H1 (cell line): ENCODE measurements at regions of chr2 and their contacts with region 1.

Region 1: DNA sequence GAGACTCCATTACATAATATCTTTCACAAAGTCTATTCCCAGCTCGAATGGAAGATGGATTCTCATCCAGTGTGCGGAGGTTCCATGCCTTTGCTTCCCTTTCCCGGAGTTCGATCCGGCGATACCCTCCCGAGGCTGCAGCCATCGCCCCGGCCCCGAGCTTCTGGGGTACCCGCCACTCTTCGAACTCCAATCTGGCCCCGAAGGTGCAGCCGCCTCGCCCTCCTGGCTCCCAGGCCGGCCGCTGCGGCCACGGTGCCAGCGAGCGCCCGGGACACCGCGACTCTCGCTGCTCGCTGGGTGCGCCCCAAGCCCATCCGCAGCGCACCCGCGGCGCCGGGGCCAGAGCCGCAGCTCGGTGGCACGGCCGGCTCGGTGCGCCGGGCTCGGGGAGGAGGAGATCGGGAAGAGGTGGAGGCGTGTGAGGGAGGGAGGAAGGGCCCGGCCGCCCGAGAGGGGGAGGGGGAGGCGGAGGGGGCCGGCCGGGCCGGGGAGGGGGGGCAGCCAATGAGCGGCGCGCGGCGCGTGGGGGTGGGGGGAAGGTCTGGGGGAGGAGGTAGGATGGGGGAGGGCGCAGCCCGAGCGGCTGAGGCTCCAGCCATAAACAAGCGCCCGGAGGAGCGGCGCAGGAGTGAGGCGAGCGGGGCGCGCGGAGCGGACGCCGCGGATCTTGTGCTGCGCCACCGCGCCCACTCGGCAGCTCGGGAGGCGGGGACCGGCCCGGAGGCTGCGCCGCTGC is at the start of gene CRIM1:
- DNase-seq: peak; percentile 67 to 84
- H3K4me3 ChIP-seq: peak within 1 kb of the TSS; percentile 80 to 93 (median 84)
- H3K27ac ChIP-seq: peak within 1 kb of the TSS; percentile 53; the same call in 1 of the 2 replicates
- H3K4me1 ChIP-seq: peaks cover 3 to 18% (median 16%) of the 10 kb centered on the region in 4 experiments; a peak in 4 of 7 replicates
- H3K27me3 ChIP-seq: peaks cover 0 to 6% (median 0%) of the 10 kb centered on the region in 4 experiments; a peak in 2 of 7 replicates
- CTCF ChIP-seq: no peak
- EP300 ChIP-seq: no peak
- POLR2A ChIP-seq: peak; percentile 72 to 85
- RAD21 ChIP-seq: no peak
- total RNA-seq, gene CRIM1: 27.4 and 28.4 TPM in 2 replicates

Region 2: GRCh38 chr2:36044411-36044810 is 310.9 kb before region 1 on chr2:
- CTCF ChIA-PET with region 1: no interaction called
- POLR2A ChIA-PET with region 1: no interaction called
- DNase-seq: no peak
- H3K4me3 ChIP-seq: no peak overlapping the region
- H3K27ac ChIP-seq: no peak overlapping the region
- H3K4me1 ChIP-seq: no peaks in the 10 kb centered on the region
- H3K27me3 ChIP-seq: no peaks in the 10 kb centered on the region
- CTCF ChIP-seq: no peak
- EP300 ChIP-seq: no peak
- POLR2A ChIP-seq: no peak
- RAD21 ChIP-seq: no peak

Region 3: GRCh38 chr2:36203366-36203765 is 152.0 kb before region 1 on chr2:
- CTCF ChIA-PET with region 1: no interaction called
- POLR2A ChIA-PET with region 1: no interaction called
- DNase-seq: no peak
- H3K4me3 ChIP-seq: no peak overlapping the region
- H3K27ac ChIP-seq: no peak overlapping the region
- H3K4me1 ChIP-seq: no peaks in the 10 kb centered on the region
- H3K27me3 ChIP-seq: no peaks in the 10 kb centered on the region
- CTCF ChIP-seq: no peak
- EP300 ChIP-seq: no peak
- POLR2A ChIP-seq: no peak
- RAD21 ChIP-seq: no peak

Region 4: DNA sequence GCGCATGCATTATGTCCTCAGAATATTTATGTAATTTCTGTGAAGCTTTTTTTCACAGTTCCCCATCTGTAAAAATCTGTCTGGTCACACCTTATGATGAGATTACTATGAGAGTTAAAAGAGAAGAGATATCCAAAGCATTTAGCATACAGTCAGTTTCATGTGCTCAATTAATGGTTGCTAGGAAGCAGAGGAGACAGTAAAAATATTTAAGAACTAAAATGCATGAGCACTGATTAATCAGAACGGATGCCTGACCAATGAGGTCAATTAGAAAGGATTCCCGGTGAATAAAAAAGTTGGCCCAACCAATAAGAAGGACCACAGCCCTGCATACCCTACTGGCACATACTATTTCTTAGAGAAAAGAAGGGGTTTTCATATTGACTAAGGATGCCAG is 11.7 kb before region 1 on chr2:
- CTCF ChIA-PET with region 1: interaction called, 14 read pairs
- POLR2A ChIA-PET with region 1: interaction called, 5 read pairs
- DNase-seq: no peak
- H3K4me3 ChIP-seq: no peak overlapping the region
- H3K27ac ChIP-seq: no peak overlapping the region
- H3K4me1 ChIP-seq: peaks cover 0 to 6% (median under 1%) of the 10 kb centered on the region in 4 experiments; a peak in 1 of 7 replicates
- H3K27me3 ChIP-seq: no peaks in the 10 kb centered on the region
- CTCF ChIP-seq: no peak
- EP300 ChIP-seq: no peak
- POLR2A ChIP-seq: no peak
- RAD21 ChIP-seq: no peak

Region 5: DNA sequence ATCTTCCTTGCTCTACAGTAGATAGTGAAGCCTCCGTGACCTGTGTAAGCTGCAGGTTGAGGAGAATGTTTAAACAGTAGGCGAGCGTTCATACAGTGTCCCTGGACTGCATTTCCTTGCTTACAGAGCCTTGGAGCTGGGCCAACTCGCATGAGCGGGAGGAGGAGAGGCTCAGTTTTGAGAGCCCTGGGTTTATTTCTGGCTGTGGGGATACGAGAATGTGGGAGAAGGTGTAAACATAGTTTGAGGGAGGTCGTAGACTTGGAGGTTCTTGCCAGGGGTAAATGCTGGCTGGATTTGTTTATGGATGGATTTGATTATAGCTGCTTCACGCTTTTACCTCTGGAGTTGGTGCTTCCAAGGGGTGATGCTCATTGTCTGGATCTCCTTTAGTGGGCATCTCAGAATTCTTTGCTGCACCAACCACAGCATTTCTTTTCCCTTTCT is 21.0 kb after region 1 on chr2:
- CTCF ChIA-PET with region 1: interaction called, 11 read pairs
- POLR2A ChIA-PET with region 1: interaction called, 6 read pairs
- DNase-seq: no peak
- H3K4me3 ChIP-seq: peak overlapping the region in 2 of 4 experiments; percentile 11 to 14; a peak in 5 of 8 replicates
- H3K27ac ChIP-seq: no peak overlapping the region
- H3K4me1 ChIP-seq: peaks cover 7 to 37% (median 35%) of the 10 kb centered on the region in 4 experiments
- H3K27me3 ChIP-seq: no peaks in the 10 kb centered on the region
- CTCF ChIP-seq: no peak
- EP300 ChIP-seq: no peak
- POLR2A ChIP-seq: no peak
- RAD21 ChIP-seq: no peak

Region 6: GRCh38 chr2:36499128-36499820 is 144.0 kb after region 1 on chr2:
- CTCF ChIA-PET with region 1: interaction called, 11 read pairs
- POLR2A ChIA-PET with region 1: no interaction called
- DNase-seq: no peak
- H3K4me3 ChIP-seq: no peak overlapping the region
- H3K27ac ChIP-seq: no peak overlapping the region
- H3K4me1 ChIP-seq: no peaks in the 10 kb centered on the region
- H3K27me3 ChIP-seq: no peaks in the 10 kb centered on the region
- CTCF ChIP-seq: no peak
- EP300 ChIP-seq: no peak
- POLR2A ChIP-seq: no peak
- RAD21 ChIP-seq: no peak

Region 7: GRCh38 chr2:36544638-36545338 is 189.5 kb after region 1 on chr2:
- CTCF ChIA-PET with region 1: interaction called, 12 read pairs
- POLR2A ChIA-PET with region 1: interaction called, 6 read pairs
- DNase-seq: no peak
- H3K4me3 ChIP-seq: no peak overlapping the region
- H3K27ac ChIP-seq: no peak overlapping the region
- H3K4me1 ChIP-seq: no peaks in the 10 kb centered on the region
- H3K27me3 ChIP-seq: no peaks in the 10 kb centered on the region
- CTCF ChIP-seq: peak in 1 of 3 experiments; percentile 33; a peak in 2 of 4 replicates
- EP300 ChIP-seq: no peak
- POLR2A ChIP-seq: no peak
- RAD21 ChIP-seq: peak; percentile 23 to 38; a peak in 2 of 4 replicates